ENCODE measurements at regions of chr5 and their contacts with region 1.

Region 1: DNA sequence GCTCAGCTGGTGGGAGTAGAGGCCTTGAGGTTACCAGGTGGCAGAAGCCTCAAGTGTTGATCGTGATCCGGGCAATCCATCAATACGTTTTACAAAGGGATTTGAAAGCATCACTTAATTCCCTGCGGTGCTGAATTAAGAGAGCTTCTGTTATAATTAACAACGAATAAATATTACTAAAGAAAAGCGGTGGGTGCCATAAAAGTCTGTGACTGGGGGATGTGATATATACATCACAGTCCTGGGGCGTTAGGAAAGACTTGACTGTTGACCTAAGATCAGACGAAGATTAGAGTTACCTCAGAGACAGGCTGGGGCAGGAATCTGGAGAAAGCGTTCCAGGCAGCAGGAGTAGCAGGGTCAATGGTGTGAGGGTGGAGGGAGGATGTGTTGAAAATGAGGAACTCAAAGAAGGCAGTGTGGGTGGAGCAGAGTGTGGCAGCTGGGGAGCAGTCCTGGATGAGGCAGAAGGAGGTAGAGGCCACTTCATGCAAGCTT is 6.7 kb upstream of the C5orf63 start:
- DNase-seq: peak; percentile 59 to 69
- H3K4me3 ChIP-seq: no peak overlapping the region
- H3K4me3 Mint-ChIP-seq: no peak overlapping the region
- H3K27ac Mint-ChIP-seq: no peak overlapping the region
- H3K4me1 ChIP-seq: peaks cover 15% of the 10 kb centered on the region
- H3K4me1 Mint-ChIP-seq: peaks cover 8% of the 10 kb centered on the region
- H3K27me3 ChIP-seq: no peaks in the 10 kb centered on the region
- H3K27me3 Mint-ChIP-seq: no peaks in the 10 kb centered on the region
- CTCF ChIP-seq: no peak

Region 2: DNA sequence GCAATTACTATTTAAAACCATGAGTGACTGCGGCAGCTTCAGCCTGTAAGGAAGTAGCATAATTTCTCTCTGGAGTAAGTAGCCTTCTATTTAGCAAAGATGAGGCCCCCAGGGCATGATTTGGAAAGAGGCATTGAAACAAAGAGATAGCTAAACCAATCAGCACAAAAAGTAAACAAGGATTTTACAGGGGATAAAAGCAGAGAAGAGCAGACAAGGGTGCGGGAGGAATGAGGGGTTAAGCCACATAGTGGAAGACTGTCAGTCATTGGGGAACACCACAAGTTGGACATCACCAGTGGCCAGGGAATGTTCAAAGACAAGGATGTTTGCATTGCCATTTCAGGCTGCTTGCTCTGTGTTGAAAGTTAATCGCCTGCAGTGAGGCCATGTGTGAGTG is 17.2 kb after region 1 on chr5:
- CTCF ChIA-PET with region 1: no interaction called
- POLR2A ChIA-PET with region 1: no interaction called
- intact Hi-C with region 1: loop called (anchors 1 kb)
- DNase-seq: peak; percentile 57 to 58
- H3K4me3 ChIP-seq: no peak overlapping the region
- H3K4me3 Mint-ChIP-seq: no peak overlapping the region
- H3K27ac Mint-ChIP-seq: peak overlapping the region; percentile 14
- H3K4me1 ChIP-seq: 0 out of 2 replicates have a peak, but pooled peaks cover 7% of the 10 kb centered on the region
- H3K4me1 Mint-ChIP-seq: peaks cover 10% of the 10 kb centered on the region
- H3K27me3 ChIP-seq: no peaks in the 10 kb centered on the region
- H3K27me3 Mint-ChIP-seq: peaks cover 8% of the 10 kb centered on the region
- CTCF ChIP-seq: no peak

Region 3: DNA sequence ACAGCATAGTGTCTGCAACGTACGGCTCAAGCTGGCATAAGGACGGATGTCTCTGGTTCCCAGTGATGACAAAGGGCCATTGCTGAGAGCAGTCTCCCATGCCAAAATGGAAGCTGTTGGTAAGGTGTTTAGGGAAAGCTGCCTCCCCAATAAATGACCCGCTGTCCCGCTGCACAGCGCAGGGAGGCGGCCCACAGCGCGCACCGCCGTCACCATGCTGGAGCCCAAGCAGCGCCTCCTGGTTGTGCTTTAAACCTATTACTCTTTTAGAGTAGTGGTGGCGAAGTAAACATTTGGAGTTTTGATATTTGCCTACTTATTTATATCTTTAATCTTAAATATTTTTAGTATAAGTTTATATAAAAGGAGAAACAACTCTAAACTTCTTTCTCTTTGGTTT is 63.7 kb after region 1 on chr5:
- CTCF ChIA-PET with region 1: no interaction called
- POLR2A ChIA-PET with region 1: no interaction called
- intact Hi-C with region 1: no loop called
- DNase-seq: no peak
- H3K4me3 ChIP-seq: no peak overlapping the region
- H3K4me3 Mint-ChIP-seq: no peak overlapping the region
- H3K27ac Mint-ChIP-seq: no peak overlapping the region
- H3K4me1 ChIP-seq: no peaks in the 10 kb centered on the region
- H3K4me1 Mint-ChIP-seq: no peaks in the 10 kb centered on the region
- H3K27me3 ChIP-seq: no peaks in the 10 kb centered on the region
- H3K27me3 Mint-ChIP-seq: peaks cover 7% of the 10 kb centered on the region
- CTCF ChIP-seq: no peak